ENCODE measurements at regions of chr20 and their contacts with region 1.

Region 1: GRCh38 chr20:32357869-32358631 is at the start of gene ASXL1:
- DNase-seq: peak; percentile 96
- H3K4me3 Mint-ChIP-seq: peak within 1 kb of the TSS; percentile 87
- H3K27ac Mint-ChIP-seq: peak within 1 kb of the TSS; percentile 96
- H3K4me1 Mint-ChIP-seq: peaks cover 38% of the 10 kb centered on the region
- H3K27me3 Mint-ChIP-seq: no peaks in the 10 kb centered on the region
- CTCF ChIP-seq: no peak
- total RNA-seq, gene ASXL1: 58.9 and 69.9 TPM in 2 replicates

Region 2: GRCh38 chr20:32125506-32125905 is 232.5 kb before region 1 on chr20:
- CTCF ChIA-PET with region 1: no interaction called
- POLR2A ChIA-PET with region 1: no interaction called
- intact Hi-C with region 1: no loop called
- DNase-seq: no peak
- H3K4me3 Mint-ChIP-seq: no peak overlapping the region
- H3K27ac Mint-ChIP-seq: no peak overlapping the region
- H3K4me1 Mint-ChIP-seq: no peaks in the 10 kb centered on the region
- H3K27me3 Mint-ChIP-seq: no peaks in the 10 kb centered on the region
- CTCF ChIP-seq: no peak

Region 3: DNA sequence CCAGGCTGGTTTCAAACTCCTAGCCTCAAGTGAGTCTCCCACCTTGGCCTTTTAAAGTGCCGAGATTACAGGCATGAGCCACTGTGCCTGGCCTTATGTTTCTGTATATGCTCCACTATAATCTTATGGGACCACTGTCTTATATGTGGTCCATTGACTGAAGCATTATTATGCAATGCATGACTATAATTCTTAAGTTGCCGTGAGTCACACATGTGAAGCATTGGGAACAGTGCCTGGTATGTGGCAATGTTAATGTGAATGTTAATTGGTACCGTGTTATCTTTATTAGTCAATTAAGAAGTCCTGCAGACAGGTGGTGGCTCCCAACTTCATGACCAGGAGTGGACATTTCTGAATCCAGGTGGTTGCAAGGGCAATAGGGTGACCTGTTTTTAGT is 14.6 kb before region 1 on chr20:
- CTCF ChIA-PET with region 1: interaction called, 10 read pairs
- POLR2A ChIA-PET with region 1: interaction called, 20 read pairs
- intact Hi-C with region 1: no loop called
- DNase-seq: peak; percentile 90
- H3K4me3 Mint-ChIP-seq: no peak overlapping the region
- H3K27ac Mint-ChIP-seq: no peak overlapping the region
- H3K4me1 Mint-ChIP-seq: peaks cover 7% of the 10 kb centered on the region
- H3K27me3 Mint-ChIP-seq: no peaks in the 10 kb centered on the region
- CTCF ChIP-seq: no peak

Region 4: DNA sequence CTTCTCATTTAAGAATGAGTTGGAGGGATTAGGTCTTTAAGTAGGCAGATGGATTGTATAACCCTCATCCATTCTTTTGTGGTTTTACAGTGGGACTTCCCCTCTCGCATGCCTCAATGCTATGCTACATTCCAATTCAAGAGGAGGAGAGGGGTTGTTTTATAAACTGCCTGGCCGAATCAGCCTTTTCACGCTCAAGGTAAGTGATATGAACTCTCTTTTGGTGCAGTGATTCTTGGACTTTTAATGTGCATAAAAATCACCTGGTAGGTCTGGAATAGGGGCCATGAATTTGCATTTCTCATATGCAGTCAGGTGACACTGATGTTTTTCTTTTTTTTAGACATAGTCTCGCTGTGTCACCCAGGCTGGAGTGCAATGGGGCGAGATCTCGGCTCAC is 10.9 kb after region 1 on chr20:
- CTCF ChIA-PET with region 1: interaction called, 6 read pairs
- POLR2A ChIA-PET with region 1: interaction called, 51 read pairs
- intact Hi-C with region 1: no loop called
- DNase-seq: no peak
- H3K4me3 Mint-ChIP-seq: no peak overlapping the region
- H3K27ac Mint-ChIP-seq: no peak overlapping the region
- H3K4me1 Mint-ChIP-seq: peaks cover 26% of the 10 kb centered on the region
- H3K27me3 Mint-ChIP-seq: no peaks in the 10 kb centered on the region
- CTCF ChIP-seq: no peak